ENCODE measurements at regions of chr15 and their contacts with region 1.

Region 1: GRCh38 chr15:31200735-31201151 is 99.2 kb upstream of the TRPM1 start:
- DNase-seq: peak; percentile 74
- ATAC-seq: peak; percentile 80 to 89

Region 2: DNA sequence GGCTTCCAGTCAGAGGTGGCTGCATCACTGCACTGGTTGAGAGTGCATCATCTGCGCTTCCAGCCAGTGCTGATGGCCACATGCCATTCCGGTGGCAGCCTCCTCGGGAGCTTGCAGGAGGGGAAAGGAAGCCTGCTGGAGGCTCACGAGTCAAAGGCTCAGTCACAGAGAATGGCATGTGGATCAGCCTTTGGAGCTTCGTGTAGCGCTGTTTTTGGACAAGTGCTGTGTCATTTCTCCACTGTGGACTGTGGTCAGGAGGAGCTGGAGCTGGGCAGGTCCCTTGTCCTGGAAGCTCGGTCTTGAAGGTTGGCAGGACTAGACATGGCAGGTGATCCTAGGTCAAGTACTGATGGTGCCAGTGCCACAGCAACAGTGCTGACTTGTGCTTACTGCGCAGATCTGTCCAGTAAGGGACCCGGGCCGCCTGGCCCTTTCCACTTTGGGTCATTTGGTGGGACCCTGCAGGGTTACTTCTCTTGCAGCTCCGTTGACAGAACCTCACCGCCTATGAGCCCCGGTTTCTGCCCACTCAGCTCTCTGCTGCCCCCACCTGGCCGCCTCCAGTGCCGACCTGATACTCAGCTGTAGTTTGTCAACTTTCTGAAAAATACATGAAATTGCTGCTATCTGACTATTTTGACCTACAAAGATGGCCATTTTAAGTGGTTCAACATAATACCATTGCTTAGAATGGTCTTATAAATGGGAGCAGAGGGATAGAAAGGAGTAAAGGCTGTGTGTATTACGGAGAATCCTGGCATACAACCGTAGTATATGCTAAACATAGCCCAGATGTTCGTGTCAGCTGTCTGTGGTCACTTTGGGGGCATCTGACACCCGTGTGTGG is 71.6 kb before region 1 on chr15:
- intact Hi-C with region 1: no loop called
- DNase-seq: peak; percentile 62
- ATAC-seq: peak; percentile 87 to 89

Region 3: DNA sequence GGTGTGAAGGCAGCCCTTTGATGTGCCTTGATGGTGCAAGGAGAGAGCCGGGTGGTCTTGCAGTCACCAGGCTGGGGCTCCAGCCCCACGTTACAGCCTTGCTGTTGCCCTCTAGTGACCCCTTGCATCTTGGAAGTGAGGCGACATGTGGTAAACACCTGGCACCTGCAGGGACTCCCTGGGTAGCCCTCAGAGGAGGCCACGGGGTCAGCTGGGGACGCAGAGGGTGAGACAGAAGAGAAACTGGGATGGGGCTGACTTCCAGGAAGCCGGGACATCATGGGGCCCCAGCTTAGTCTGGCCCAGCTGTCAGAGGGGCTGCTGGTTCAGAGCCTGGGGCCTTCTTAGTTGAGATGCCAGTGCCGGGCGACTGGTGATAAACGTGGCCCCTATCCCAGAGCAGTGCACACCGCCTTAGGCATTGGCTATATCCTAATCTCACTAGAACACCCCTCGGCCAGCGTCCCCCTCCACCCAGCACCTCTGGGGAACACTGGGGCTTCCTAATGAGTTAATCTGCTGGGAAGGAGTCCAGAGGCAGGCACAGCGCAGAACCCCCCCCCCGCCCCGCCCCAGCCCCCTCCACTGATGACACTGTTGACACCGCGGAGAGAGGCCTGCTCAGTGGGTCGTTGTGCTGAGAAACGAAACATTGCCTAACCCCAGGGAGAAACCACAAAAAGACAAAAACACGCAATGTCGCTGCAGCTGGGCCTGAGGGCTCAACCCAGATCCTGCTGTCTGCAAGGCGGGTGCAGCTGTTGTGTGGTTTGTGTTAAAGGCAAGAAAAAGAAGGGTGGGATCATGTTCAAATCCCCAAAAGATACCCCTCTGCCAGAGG is 65.3 kb after region 1 on chr15:
- intact Hi-C with region 1: no loop called
- DNase-seq: no peak
- ATAC-seq: peak in 1 of 2 donors; percentile 43

Region 4: GRCh38 chr15:31435261-31435911 is 234.6 kb after region 1 on chr15:
- intact Hi-C with region 1: loop called in 1 of 2 experiments (anchors 5 kb)
- DNase-seq: peak; percentile 68
- ATAC-seq: peak; percentile 81 to 89